ENCODE measurements at regions of chr6 and their contacts with region 1.

Region 1: GRCh38 chr6:104689551-104690205 is 170.0 kb downstream of the HACE1 start:
- DNase-seq: no peak
- H3K4me3 Mint-ChIP-seq: no peak overlapping the region
- H3K27ac Mint-ChIP-seq: no peak overlapping the region
- H3K4me1 Mint-ChIP-seq: peaks cover 18% of the 10 kb centered on the region
- H3K27me3 Mint-ChIP-seq: no peaks in the 10 kb centered on the region

Region 2: DNA sequence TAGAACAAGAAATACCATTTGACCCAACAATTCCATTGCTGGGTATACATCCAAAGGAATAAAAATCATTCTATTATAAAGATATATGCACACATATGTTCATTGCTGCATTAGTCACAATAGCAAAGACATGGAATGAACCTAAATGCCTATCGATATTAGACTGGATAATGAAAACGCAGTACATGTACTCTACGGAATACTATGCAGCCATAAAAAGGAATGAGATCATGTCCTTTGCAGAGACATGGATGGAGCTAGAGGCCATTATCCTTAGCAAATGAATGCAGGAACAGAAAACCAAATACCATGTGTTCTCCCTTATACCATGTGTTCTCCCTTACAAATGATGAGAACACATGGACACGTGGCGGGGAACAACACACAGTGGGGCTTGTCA is 20.2 kb before region 1 on chr6:
- CTCF ChIA-PET with region 1: no interaction called
- POLR2A ChIA-PET with region 1: no interaction called
- intact Hi-C with region 1: no loop called
- DNase-seq: no peak
- H3K4me3 Mint-ChIP-seq: no peak overlapping the region
- H3K27ac Mint-ChIP-seq: no peak overlapping the region
- H3K4me1 Mint-ChIP-seq: no peaks in the 10 kb centered on the region
- H3K27me3 Mint-ChIP-seq: no peaks in the 10 kb centered on the region

Region 3: DNA sequence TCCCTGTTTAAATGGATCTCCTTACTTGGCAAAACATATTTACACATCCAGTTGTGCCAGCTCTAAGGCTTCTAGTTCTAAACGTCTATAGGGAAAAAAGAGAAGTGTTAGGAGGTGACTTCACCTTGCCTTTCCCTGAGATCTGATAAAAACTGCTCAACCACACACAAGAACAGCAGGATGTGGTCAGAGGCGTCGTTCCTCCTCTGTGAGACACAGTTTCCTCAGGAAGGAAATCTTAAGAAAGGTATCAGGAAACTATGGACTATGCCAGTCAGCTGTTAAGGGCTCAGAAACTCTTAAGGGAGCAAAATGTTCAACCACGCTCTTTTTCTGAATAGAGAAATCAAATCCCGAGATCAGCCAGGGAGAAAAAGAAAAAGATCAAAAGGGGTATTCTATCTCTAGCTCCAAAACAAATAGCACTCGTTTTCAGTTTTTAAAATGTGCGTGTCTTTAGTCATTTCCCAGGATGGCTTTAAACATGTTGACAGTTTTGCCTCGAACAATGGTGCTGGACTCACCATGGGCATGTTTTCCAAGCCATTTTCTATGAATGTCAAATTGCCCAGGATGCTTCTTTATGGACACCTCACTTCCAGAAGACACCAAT is 15.5 kb after region 1 on chr6:
- CTCF ChIA-PET with region 1: interaction called, 3 read pairs
- POLR2A ChIA-PET with region 1: no interaction called
- intact Hi-C with region 1: loop called (anchors 2 kb)
- DNase-seq: peak; percentile 55
- H3K4me3 Mint-ChIP-seq: peak overlapping the region; percentile 21
- H3K27ac Mint-ChIP-seq: no peak overlapping the region
- H3K4me1 Mint-ChIP-seq: peaks cover 35% of the 10 kb centered on the region
- H3K27me3 Mint-ChIP-seq: no peaks in the 10 kb centered on the region